Lower leg skin (tissue), 4 donors: ENCODE measurements at regions of chr3 and their contacts with region 1.

Region 1: DNA sequence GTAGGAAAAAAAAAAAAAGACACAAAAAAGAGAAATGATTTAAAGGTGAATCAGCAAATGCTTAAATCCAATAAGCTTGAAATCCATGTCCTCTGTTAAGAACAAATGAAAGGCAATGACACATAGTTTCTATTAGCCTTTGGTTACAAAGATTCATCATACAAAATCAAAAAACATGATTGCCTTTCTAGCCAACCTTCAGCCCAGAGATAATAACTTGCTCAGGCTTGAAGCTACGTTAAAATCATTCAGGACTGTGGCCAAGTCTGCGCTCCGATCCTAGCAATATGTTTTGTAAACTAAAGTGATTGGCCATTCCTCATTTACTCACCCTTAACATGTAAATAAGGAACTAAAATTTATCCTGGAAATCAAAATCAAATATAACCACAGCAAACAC is 556.7 kb downstream of the FGF12 start:
- DNase-seq: no peak
- H3K4me3 ChIP-seq: no peak overlapping the region
- CTCF ChIP-seq: no peak
- POLR2A ChIP-seq: no peak

Region 2: DNA sequence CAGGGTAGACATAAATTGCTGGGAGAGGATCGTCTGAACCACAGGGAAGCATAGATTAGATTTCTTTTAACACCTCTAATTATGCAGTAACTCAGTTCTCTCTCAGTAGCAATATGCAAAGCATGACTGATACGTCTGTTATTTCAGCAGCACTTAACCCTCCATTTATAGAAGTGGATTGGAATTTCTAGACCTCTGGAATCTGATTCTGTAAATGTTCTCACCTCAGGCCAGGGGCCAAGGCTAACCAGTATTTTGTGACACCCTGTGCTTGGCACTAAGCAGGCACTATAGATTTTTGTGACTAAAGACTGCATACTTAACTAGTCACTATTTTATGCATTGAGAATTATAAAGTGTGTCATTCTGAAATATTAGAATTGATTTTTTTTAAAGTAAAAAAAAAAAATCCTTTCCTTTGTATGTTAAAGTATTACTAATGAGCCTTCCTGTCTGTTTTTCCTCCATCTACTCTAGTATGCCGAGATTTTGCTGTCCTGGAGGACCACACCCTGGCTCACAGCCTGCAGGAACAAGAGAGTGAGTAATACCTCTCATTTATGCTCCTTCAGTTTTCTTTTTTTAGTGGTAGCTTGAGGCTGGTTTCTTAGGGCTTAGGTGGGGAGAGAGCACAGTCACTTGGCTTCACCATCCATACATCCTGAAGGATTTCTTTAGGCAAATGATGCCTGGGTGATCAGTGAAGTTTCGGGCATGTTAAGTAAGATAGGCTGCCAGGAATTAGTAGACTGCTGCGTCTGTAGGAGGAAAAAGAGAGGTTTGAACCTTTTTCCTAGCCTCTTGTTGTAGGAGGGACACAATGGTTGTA is 813.8 kb before region 1 on chr3:
- intact Hi-C with region 1: no loop called
- DNase-seq: peak; percentile 34 to 84
- H3K4me3 ChIP-seq: no peak overlapping the region
- CTCF ChIP-seq: no peak
- POLR2A ChIP-seq: no peak

Region 3: DNA sequence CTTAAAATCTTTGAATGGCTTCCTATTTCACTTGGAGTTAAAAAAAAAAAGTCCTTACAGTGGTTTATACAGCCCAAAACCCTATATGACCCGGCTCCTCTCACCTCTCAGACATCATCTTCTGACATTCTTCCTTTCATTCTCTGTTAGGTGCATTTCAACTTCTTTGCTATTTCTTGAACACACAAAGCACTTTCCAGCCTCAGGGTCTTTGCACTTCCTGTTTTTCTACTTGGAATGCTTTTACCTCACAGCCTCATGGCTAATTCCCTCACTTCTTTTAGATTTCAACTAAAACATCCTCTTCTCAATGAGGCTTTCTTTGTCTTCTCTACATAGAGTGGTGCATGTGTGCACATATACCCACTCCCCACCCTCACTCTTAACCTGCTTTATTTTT is 838.0 kb after region 1 on chr3:
- intact Hi-C with region 1: loop called (anchors 5 kb)
- DNase-seq: no peak
- H3K4me3 ChIP-seq: no peak overlapping the region
- CTCF ChIP-seq: no peak
- POLR2A ChIP-seq: no peak